Panc1 (cell line): ENCODE measurements at regions of chr3 and their contacts with region 1.

Region 1: DNA sequence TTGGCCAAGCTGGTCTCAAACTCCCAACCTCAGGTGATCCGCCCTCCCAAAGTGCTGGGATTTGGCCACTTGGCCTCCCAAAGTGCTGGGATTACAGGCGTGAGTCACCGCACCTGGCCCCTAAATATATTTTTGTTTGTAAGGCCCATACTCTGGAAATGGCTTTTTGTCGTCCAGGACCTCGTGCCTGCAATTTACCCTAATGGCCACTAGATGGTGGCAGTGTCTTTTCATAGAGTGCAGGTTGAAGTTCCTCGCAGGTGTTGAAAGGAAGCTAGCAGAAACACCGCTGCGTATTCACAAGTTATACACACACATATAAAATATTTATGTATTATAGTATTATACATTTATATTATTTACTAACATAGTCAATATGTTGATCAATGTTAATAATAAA is 97.2 kb downstream of the LRTM1 start:
- DNase-seq: no peak
- ATAC-seq: no peak
- H3K4me3 ChIP-seq: no peak overlapping the region
- H3K27ac ChIP-seq: no peak overlapping the region
- H3K4me1 ChIP-seq: no peaks in the 10 kb centered on the region
- H3K27me3 ChIP-seq: no peaks in the 10 kb centered on the region
- CTCF ChIP-seq: peak; percentile 78

Region 2: DNA sequence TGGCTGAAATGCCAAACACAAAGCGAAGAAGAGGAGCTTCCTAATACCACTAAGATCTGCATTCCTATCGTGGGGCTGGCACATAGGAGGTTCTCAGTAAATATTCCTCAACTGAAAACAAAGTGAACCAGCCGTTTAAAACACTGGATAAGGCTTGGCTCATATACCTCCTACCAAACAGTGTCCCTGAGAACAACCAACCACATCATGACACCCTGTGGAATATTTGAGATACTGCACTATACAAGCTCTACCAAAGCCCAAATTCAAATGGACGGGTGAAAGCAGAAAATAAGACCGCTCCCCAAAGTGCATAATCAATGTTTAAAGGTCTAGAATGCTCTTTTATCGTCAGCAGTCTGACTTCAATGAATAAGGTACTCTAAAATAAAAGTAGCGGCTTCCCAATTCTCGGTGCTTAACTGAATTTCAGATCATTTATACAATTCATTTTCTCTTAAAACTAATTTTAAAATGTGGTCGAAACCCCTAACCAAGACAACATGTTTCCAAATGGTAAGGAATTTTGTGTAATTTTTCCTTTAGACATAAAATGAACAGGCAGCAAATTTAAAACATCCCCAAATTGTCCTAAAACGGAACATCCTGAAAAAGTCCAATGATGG is 1211.8 kb after region 1 on chr3:
- CTCF ChIA-PET with region 1: no interaction called
- POLR2A ChIA-PET with region 1: no interaction called
- in situ Hi-C with region 1: no loop called
- intact Hi-C with region 1: loop called (anchors 10 kb)
- DNase-seq: peak; percentile 13
- ATAC-seq: peak; percentile 82
- H3K4me3 ChIP-seq: no peak overlapping the region
- H3K27ac ChIP-seq: no peak overlapping the region
- H3K4me1 ChIP-seq: no peaks in the 10 kb centered on the region
- H3K27me3 ChIP-seq: peaks cover 2% of the 10 kb centered on the region; the same call in 1 of the 2 replicates
- CTCF ChIP-seq: peak; percentile 50